Psoas muscle (tissue), 8 donors: ENCODE measurements at regions of chr12 and their contacts with region 1.

Region 1: DNA sequence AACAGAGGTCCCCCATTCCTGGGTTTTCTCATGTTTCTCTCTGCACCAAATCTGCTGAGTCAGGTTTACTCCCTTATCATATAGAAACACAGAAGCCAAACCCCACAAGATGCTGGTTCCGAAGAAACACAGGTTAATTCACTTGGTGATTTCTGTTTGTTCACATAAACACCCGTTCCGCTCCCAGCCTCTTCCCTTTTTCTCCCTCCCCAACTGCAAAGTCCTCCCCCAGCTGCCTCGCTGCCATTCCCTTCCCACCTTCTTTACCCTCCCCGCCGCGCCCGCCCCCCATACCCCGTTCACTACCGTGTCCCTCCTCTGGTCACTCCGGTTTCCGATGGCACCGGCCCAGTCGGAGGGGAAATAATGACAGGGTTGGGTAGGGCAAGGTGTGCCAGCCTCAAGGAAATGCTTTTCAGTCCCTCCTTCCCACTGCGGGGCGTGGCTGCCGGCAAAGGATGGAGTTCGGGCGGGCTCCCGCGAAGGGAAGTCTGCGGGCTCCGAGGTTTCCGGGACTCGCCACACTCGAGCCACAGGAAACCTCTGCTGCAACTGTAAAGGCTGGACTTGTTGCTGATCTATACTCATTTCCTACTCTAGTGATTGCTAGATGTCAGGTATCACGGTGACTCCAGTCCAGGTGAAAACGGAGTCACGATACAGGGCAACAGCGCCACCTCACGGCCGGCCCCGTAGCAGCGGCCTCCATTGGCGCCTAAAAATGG is at the start of gene STYK1:
- DNase-seq: peak; percentile 23 to 64
- ATAC-seq: peak; percentile 43 to 84 (median 70)
- H3K4me3 ChIP-seq: peak within 1 kb of the TSS; percentile 69
- H3K27ac ChIP-seq: no peak within 1 kb of the TSS
- H3K4me1 ChIP-seq: no peaks in the 10 kb centered on the region
- H3K27me3 ChIP-seq: peaks cover 3 to 17% (median 4%) of the 10 kb centered on the region in 3 donors
- CTCF ChIP-seq: peak; percentile 84
- total RNA-seq, gene STYK1: 0.06 to 0.18 (median 0.09) TPM in 3 of 4 donors, not detected in the other

Region 2: DNA sequence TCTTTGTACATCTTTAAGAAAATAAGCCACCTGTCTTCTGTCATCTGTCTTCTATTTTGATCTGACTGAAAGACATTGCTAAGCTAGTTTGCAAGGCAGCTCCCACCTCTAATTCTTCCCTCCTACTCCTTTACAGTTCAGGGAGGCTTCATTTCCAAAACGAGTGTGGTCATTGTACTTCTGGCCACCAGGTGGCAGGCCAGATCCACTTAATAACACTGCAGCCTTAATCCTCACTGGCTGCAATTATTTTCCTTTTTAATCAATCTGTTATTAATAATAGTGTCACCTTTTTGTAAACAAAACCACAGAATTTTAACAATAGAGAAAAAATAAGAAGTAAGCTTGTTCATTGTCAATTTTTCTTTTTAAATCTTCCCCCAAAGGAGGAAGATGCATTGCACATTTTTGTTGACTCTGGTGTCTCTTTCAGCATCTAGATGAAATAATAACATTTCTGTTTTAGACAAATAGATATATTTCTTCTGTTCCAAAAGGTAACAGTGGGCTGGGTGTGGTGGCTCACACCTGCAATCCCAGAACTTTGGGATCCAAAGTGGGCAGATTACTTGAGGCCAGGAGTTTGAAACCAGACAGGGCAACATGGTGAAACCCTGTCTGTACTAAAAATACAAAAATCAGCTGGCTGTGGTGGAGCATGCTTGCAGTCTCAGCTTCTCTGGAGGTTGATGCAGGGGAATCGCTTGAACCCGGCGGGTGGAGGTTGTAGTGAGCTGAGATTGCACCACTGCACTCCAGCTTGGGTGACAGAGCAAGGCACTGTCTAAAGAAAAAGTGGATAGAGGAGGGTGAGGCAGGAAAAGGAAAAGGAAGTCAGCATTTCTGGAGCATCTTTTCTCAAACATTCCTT is 437.8 kb before region 1 on chr12:
- intact Hi-C with region 1: loop called in 1 of 2 experiments (anchors 10 kb)
- DNase-seq: no peak
- ATAC-seq: peak; percentile 76 to 89 (median 79)
- H3K4me3 ChIP-seq: no peak overlapping the region
- H3K27ac ChIP-seq: no peak overlapping the region
- H3K4me1 ChIP-seq: no peaks in the 10 kb centered on the region
- H3K27me3 ChIP-seq: no peaks in the 10 kb centered on the region
- CTCF ChIP-seq: peak; percentile 92

Region 3: DNA sequence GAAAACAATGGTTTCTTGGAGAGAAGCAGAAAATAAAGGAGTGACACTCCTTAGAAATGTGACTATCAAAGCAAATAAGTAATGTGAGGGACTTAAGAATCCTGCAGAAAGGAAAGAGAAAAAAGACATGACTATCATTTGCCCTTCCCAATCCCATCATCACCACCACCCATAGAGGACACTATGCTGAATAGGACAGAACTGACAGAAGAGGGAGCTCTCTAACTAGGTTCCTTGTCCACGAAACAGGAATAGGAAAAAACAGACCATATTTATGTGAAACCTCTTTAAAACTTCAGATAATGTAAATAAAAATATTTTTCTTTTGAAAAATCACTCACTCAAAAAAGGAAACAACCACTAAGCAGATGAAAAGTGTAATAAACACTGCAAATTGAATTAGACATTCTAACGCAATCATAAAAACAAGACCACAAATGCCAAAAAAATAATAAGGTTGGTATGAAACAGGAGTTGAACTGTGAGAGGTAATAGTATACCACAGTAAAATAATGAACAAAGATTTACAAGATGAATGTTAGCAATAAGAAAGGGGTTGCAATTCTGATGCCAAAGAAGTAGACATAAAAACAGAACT is 342.1 kb before region 1 on chr12:
- intact Hi-C with region 1: loop called in 1 of 2 experiments (anchors 10 kb)
- DNase-seq: no peak
- ATAC-seq: peak; percentile 67 to 82 (median 70)
- H3K4me3 ChIP-seq: no peak overlapping the region
- H3K27ac ChIP-seq: no peak overlapping the region
- H3K4me1 ChIP-seq: no peaks in the 10 kb centered on the region
- H3K27me3 ChIP-seq: no peaks in the 10 kb centered on the region
- CTCF ChIP-seq: peak; percentile 77

Region 4: DNA sequence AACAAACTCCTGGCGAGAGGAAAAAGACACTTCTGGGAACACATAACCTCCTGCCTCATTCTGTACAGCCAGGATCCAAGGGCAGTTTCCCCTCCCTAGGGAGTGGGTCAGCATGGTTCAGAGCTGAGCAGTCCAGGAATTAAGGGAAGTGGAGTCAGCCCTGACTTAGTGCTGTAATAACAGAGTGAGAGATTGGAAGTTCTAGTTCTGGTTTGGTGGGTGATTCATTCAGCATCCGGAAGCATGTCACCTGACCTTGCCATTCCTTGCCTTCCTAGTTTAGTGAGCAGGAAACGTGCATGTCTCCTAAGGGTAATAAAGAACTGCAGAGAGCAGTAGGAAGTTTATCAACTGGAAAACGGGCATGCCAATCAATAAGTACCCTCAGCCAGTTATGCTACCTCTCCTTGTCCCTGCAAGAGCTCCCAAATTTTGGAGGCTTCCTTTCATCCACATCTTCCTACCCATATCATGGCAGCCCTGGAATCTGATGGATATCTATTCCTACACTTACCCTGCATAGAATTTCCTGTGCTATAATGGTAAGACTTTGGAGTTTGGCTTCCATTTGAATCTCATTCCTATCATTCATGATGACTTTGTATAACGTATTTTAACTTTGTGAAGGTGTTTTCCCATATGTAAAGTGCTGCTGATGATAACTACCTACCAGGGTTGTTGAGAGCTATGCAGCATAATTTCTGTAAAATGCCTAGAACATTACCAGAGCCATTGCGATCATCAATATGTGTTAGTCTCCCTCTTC is 31.9 kb before region 1 on chr12:
- intact Hi-C with region 1: loop called in 1 of 2 experiments (anchors 1 kb)
- DNase-seq: no peak
- ATAC-seq: peak in 1 of 4 donors; percentile 37
- H3K4me3 ChIP-seq: no peak overlapping the region
- H3K27ac ChIP-seq: no peak overlapping the region
- H3K4me1 ChIP-seq: no peaks in the 10 kb centered on the region
- H3K27me3 ChIP-seq: no peaks in the 10 kb centered on the region
- CTCF ChIP-seq: no peak

Region 5: GRCh38 chr12:10749700-10750384 is 76.0 kb after region 1 on chr12:
- intact Hi-C with region 1: loop called in 1 of 2 experiments (anchors 5 kb)
- DNase-seq: peak; percentile 48 to 70
- ATAC-seq: peak; percentile 90 to 97 (median 92)
- H3K4me3 ChIP-seq: peak overlapping the region; percentile 56
- H3K27ac ChIP-seq: peak overlapping the region; percentile 56
- H3K4me1 ChIP-seq: peaks cover 10% of the 10 kb centered on the region
- H3K27me3 ChIP-seq: no peaks in the 10 kb centered on the region
- CTCF ChIP-seq: peak; percentile 93

Region 6: GRCh38 chr12:11862798-11863197 is 1189.0 kb after region 1 on chr12:
- intact Hi-C with region 1: no loop called
- DNase-seq: no peak
- ATAC-seq: peak; percentile 74 to 88 (median 75)
- H3K4me3 ChIP-seq: no peak overlapping the region
- H3K27ac ChIP-seq: peak overlapping the region; percentile 81
- H3K4me1 ChIP-seq: peaks cover 38% of the 10 kb centered on the region
- H3K27me3 ChIP-seq: no peaks in the 10 kb centered on the region
- CTCF ChIP-seq: no peak